ENCODE measurements at regions of chr1 and their contacts with region 1.

Region 1: GRCh38 chr1:18956369-18957135 is at the start of gene IFFO2:
- DNase-seq: peak; percentile 99
- ATAC-seq: peak; percentile 85
- H3K4me3 Mint-ChIP-seq: peak within 1 kb of the TSS; percentile 88
- H3K27ac Mint-ChIP-seq: peak within 1 kb of the TSS; percentile 12
- H3K4me1 Mint-ChIP-seq: peaks cover 49% of the 10 kb centered on the region
- H3K27me3 Mint-ChIP-seq: peaks cover 11% of the 10 kb centered on the region
- CTCF ChIP-seq: no peak
- total RNA-seq, gene IFFO2: 13.0 and 13.6 TPM in 2 replicates

Region 2: GRCh38 chr1:18895317-18895716 is 61.2 kb before region 1 on chr1:
- CTCF ChIA-PET with region 1: no interaction called
- POLR2A ChIA-PET with region 1: no interaction called
- intact Hi-C with region 1: no loop called
- DNase-seq: no peak
- ATAC-seq: no peak
- H3K4me3 Mint-ChIP-seq: no peak overlapping the region
- H3K27ac Mint-ChIP-seq: no peak overlapping the region
- H3K4me1 Mint-ChIP-seq: no peaks in the 10 kb centered on the region
- H3K27me3 Mint-ChIP-seq: no peaks in the 10 kb centered on the region
- CTCF ChIP-seq: no peak

Region 3: DNA sequence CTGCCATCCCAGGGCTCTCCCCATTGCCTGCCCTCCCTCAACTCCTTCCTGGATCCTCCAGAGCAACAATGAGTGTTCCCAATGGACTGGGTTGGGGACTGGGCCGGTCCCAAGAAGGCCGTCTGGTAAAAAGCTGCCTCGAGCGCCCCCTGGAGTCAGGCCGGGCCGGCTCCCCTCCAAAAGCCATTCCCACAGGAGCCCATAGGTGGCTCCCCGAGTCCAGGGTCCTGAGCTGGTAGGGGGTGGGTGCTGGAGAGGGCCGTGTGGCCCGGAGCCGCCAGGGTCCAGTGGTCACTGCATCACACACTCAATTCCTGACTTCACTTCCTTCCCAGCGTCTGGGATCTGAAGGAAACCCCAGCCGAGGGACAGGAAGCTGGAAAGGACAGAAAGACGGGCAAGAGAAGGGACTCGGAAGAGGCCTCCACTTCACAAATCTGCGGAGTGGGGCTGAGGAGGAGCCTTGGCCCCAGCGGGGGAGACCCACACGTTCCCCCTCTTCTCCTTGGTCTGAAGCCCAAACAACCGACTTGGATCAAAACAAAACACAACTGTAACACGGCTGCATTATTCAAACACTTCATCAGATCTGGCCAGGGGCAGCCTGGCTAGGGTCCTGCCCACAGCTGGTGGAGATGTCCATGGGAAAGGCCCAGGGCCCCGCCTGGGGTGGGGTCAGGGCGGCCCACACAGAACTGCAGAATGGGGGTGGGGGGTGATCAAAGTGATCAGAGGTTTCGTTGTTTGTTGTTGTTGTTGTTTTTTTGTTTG is 43.3 kb before region 1 on chr1:
- CTCF ChIA-PET with region 1: interaction called, 190 read pairs
- POLR2A ChIA-PET with region 1: interaction called, 10 read pairs
- intact Hi-C with region 1: no loop called
- DNase-seq: peak; percentile 73
- ATAC-seq: peak; percentile 93
- H3K4me3 Mint-ChIP-seq: no peak overlapping the region
- H3K27ac Mint-ChIP-seq: no peak overlapping the region
- H3K4me1 Mint-ChIP-seq: peaks cover 18% of the 10 kb centered on the region
- H3K27me3 Mint-ChIP-seq: no peaks in the 10 kb centered on the region
- CTCF ChIP-seq: no peak

Region 4: DNA sequence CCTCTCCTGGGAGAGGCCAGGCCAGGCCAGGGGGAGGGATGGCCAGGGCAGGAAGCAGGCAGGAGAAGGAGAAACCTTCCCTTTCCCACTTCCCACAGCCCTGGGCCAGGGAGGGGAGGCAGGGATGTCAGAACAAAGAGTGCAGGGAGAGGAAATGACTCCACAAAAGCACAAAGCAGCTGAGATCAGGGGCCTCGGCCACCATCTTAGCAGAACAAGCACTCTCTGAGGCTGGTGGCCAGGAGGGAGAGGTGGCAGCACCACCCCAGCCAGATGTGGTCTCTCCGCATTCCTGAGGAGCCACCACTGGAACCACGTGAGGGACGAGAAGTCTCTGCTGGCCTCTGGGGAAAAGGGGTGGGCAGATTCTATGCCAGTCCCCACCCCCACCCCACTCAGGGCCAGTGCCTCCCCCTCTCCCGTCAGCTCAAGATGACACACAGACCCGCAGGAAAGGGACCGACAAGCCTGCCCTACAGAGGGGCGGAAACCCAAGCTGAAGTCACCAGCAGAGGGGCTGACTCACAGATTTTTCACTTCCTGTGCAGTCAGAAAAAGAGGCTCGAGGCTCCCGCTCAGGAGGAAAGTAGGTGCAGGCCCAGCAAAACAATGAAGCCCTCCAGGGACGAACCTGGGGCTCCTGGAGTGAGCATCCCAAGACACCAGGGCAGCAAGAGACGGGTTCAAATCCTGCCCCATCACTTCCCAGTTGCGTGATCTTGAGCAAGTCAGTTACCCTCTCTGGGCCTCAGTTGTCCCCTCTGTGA is 30.1 kb before region 1 on chr1:
- CTCF ChIA-PET with region 1: interaction called, 27 read pairs
- POLR2A ChIA-PET with region 1: interaction called, 89 read pairs
- intact Hi-C with region 1: loop called (anchors 1 kb)
- DNase-seq: peak; percentile 58
- ATAC-seq: peak; percentile 86
- H3K4me3 Mint-ChIP-seq: peak overlapping the region; percentile 79
- H3K27ac Mint-ChIP-seq: peak overlapping the region; percentile 95
- H3K4me1 Mint-ChIP-seq: peaks cover 74% of the 10 kb centered on the region
- H3K27me3 Mint-ChIP-seq: no peaks in the 10 kb centered on the region
- CTCF ChIP-seq: no peak

Region 5: GRCh38 chr1:18967066-18967690 is 10.6 kb after region 1 on chr1:
- CTCF ChIA-PET with region 1: interaction called, 11 read pairs
- POLR2A ChIA-PET with region 1: interaction called, 15 read pairs
- intact Hi-C with region 1: loop called (anchors 2 kb)
- DNase-seq: no peak
- ATAC-seq: no peak
- H3K4me3 Mint-ChIP-seq: no peak overlapping the region
- H3K27ac Mint-ChIP-seq: no peak overlapping the region
- H3K4me1 Mint-ChIP-seq: peaks cover 4% of the 10 kb centered on the region
- H3K27me3 Mint-ChIP-seq: peaks cover 8% of the 10 kb centered on the region
- CTCF ChIP-seq: no peak

Region 6: DNA sequence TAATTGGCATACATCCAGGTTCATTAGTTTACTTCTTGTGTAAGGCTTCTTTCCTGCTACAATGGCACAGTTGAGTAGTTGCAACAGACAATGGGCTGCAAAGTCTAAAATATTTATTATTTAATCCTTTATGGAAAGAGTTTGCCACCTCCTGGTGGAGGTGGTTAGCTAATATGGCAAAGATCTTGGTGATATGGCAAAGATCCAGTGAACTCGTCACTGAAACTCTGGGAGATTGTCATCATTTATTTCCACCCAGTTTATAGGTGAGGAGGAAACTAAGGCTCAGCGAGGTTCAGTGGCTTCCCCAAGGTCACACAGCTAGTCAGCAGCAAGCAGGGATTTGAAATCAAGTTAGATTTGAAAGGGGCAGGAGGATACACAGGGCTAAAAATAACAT is 16.0 kb after region 1 on chr1:
- CTCF ChIA-PET with region 1: interaction called, 11 read pairs
- POLR2A ChIA-PET with region 1: interaction called, 15 read pairs
- intact Hi-C with region 1: loop called (anchors 2 kb)
- DNase-seq: no peak
- ATAC-seq: peak; percentile 37
- H3K4me3 Mint-ChIP-seq: no peak overlapping the region
- H3K27ac Mint-ChIP-seq: no peak overlapping the region
- H3K4me1 Mint-ChIP-seq: no peaks in the 10 kb centered on the region
- H3K27me3 Mint-ChIP-seq: peaks cover 11% of the 10 kb centered on the region
- CTCF ChIP-seq: no peak

Region 7: DNA sequence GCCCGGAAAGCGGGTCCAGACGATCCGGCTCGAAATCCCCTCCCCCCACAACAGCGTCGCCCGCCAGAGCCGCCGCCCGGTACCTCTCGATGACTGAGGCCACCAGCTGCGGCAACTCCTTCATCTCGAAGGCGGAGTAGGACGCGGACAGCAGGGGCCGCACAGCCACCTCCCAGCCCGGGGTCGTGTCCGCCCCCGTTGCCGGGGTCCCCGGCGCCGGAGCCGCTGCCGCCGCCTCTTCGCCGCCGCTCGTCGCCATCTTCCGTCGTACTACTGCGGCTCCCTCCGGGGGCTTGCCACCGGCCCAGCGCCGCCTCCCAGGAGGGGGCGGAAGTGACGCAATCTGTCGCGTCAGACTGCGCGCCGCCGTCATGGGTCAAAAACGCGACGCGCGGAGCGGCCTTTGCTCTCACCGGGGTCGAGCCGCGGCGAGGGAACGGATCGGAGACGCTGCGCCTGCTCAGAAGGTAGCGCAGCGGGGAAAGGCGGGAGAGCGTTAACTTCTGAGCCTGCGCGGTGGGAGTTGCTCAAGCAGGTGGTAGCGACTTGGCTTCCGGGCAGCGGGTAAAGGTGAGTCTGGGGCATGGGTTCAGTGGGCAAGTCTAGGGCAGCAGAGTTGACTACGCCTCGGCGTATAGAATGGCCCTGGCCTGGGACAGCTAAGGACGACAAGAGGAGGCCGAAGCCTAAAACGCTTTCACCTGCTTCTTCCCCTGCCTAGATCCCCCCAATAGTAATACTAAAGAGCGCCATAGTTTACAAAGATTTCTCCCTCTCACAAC is 253.6 kb after region 1 on chr1 and contains the start of gene UBR4:
- CTCF ChIA-PET with region 1: no interaction called
- POLR2A ChIA-PET with region 1: no interaction called
- intact Hi-C with region 1: loop called (anchors 1 kb)
- DNase-seq: peak; percentile 98
- ATAC-seq: peak; percentile 77
- H3K4me3 Mint-ChIP-seq: peak within 1 kb of the TSS; percentile 95
- H3K27ac Mint-ChIP-seq: peak within 1 kb of the TSS; percentile 97
- H3K4me1 Mint-ChIP-seq: peaks cover 57% of the 10 kb centered on the region
- H3K27me3 Mint-ChIP-seq: no peaks in the 10 kb centered on the region
- CTCF ChIP-seq: no peak
- total RNA-seq, gene UBR4: 221 and 262 TPM in 2 replicates

Region 8: DNA sequence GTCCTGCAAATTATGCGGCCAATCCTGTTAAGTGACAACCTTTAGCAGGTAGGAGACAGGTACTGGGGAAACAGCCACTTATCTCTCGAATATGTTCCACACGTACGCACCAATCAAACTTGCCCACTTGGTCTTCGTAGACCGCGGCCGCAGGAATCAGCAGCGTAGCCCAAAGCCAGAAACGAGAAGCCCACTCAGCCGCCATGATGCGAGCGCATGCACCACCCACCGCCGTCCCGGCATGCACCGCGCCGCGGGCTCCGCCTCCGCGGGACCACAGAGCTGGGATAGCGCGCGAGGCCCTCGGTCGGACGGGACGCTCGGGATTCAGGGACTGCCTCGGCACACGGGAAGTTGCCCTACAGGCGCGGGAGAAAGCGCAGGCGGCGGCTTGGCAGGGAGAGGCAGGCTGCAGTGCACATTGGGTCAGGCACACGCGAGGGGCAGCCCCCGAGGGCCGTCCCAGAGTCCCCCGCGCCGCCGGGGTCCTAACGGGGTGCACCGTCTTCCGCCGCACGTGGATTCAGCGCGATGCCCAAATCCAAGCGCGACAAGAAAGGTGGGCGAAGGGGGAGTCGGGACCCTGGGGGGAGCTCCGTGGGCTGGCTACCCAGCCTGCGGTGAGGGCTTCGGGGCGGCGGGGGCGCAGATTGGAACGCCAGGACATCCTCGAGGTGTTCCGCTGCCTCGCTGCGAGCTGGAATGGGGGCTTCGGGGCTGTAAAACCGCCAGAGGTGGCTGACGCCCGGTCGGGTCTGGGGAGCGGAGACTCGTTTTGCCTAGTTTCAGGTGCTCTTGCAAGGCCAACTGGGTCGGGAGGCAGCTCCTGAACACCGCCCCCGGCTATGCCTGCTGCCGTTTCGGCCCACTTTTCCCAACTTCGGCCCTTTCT is 295.0 kb after region 1 on chr1 and contains the starts of genes EMC1 and MRTO4:
- CTCF ChIA-PET with region 1: no interaction called
- POLR2A ChIA-PET with region 1: interaction called, 3 read pairs
- intact Hi-C with region 1: loop called (anchors 2 kb)
- DNase-seq: peak; percentile 97
- ATAC-seq: peak; percentile 93
- H3K4me3 Mint-ChIP-seq: peak within 1 kb of the TSS; percentile 96
- H3K27ac Mint-ChIP-seq: peak within 1 kb of the TSS; percentile 92
- H3K4me1 Mint-ChIP-seq: peaks cover 32% of the 10 kb centered on the region
- H3K27me3 Mint-ChIP-seq: no peaks in the 10 kb centered on the region
- CTCF ChIP-seq: no peak
- total RNA-seq, gene EMC1: 40.0 and 42.7 TPM in 2 replicates
- total RNA-seq, gene MRTO4: 61.5 and 73.1 TPM in 2 replicates

Measured in activated B cell treated with CpG ODN at 0.5 μM for 24 hours (primary cell).